Right cardiac atrium (tissue), 5 donors: ENCODE measurements at regions of chr9 and their contacts with region 1.

Region 1: GRCh38 chr9:97559111-97559514 is 57.6 kb downstream of the TMOD1 start:
- DNase-seq: peak in 1 of 3 donors; percentile 48
- ATAC-seq: no peak
- H3K4me3 ChIP-seq: no peak overlapping the region
- H3K27ac ChIP-seq: peak overlapping the region; percentile 90
- H3K4me1 ChIP-seq: peaks cover 42% of the 10 kb centered on the region
- H3K27me3 ChIP-seq: no peaks in the 10 kb centered on the region

Region 2: GRCh38 chr9:97406620-97407177 is 152.4 kb before region 1 on chr9:
- intact Hi-C with region 1: no loop called
- DNase-seq: no peak
- ATAC-seq: no peak
- H3K4me3 ChIP-seq: no peak overlapping the region
- H3K27ac ChIP-seq: no peak overlapping the region
- H3K4me1 ChIP-seq: no peaks in the 10 kb centered on the region
- H3K27me3 ChIP-seq: no peaks in the 10 kb centered on the region

Region 3: GRCh38 chr9:97501177-97501971 is 57.7 kb before region 1 on chr9 and contains the start of gene TMOD1:
- intact Hi-C with region 1: loop called in 1 of 4 experiments (anchors 2 kb)
- DNase-seq: peak; percentile 77 to 93 (median 91)
- ATAC-seq: peak; percentile 76 to 84
- H3K4me3 ChIP-seq: peak within 1 kb of the TSS; percentile 91
- H3K27ac ChIP-seq: peak within 1 kb of the TSS; percentile 87
- H3K4me1 ChIP-seq: peaks cover 16% of the 10 kb centered on the region
- H3K27me3 ChIP-seq: no peaks in the 10 kb centered on the region
- total RNA-seq, gene TMOD1: 177 to 220 (median 208) TPM

Region 4: DNA sequence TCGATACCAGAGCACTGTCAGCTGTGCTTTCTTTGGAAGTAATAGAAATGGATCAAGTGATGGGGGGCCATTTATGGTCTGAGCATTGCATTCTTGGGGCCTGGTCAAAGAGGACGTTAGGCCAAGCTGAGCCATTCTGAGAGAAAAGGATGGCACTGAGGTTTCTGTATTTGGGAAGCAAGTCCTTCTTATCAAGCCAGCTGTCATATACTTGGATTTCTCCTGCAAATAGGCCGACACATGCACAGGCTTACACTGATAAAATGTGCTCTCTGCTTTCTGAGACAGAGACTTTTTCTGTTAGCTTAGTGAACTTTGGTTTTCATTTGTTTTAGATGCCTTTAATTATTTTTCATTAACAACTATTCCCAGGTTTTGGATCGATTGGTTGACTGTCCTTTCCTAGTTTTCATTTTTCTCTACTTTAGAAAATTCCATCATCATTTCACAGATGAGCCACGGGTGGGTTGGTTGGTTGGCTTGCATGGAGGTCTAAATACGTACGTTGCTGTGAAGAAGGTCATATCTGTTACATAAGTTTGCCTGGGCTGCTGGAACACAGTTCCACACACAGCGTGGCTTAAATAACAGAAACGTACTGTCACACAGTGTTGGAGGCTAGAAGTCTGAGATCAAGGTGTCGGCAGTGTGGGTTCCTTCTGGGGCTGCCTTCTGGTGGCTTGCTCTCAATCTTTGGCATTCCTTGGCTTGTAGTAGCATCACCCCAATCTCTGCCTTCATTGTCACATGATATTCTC is 37.4 kb before region 1 on chr9:
- intact Hi-C with region 1: loop called in 1 of 4 experiments (anchors 5 kb)
- DNase-seq: no peak
- ATAC-seq: peak in 1 of 2 donors; percentile 19
- H3K4me3 ChIP-seq: no peak overlapping the region
- H3K27ac ChIP-seq: peak overlapping the region; percentile 86
- H3K4me1 ChIP-seq: peaks cover 15% of the 10 kb centered on the region
- H3K27me3 ChIP-seq: no peaks in the 10 kb centered on the region